B cell (primary cell): ENCODE measurements at regions of chr11 and their contacts with region 1.

Region 1: DNA sequence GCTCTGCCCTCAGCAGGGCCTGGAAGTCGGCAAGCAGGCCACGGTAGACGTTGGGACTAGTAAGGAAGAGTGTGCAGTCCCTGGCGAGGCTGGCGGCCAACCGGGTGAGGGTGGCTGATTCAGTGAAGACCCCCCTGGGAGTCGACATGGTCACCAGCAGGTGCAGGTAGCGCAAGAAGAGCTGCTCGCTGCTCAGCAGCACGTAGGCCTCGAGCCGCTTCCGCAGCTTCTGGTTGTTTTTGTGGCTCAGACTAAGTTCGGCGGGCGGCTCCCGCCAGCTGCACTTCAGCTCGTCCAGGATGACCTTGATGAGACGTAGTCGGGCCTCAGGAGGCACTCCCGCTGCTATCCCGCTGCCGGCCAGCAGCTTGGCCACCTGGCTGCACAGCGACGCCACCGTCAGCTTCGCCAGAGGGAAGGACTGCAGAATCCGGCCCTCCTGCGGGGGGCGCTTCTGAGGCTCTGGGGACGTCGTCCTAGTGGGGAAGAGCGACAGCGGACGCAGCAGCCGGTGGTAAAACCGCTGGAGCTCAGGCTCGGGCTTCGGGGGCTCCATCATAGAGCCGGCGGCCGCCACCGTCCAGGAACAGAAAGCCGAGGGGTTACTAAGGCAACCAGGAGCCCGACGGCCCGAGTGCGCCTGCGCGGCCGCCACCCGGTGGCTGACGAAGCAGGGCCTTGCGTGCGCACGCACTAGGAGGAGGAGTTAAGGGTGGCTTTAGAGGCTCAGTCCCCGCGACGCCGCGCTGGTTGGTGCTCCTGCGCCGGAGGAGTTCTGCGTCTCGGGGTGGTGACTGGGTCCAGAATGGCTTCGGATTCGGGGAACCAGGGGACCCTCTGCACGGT is at the starts of genes CCDC87 and CCS:
- DNase-seq: peak; percentile 96
- ATAC-seq: peak; percentile 95
- H3K4me3 ChIP-seq: peak within 1 kb of the TSS; percentile 63 to 84 (median 77)
- H3K4me3 Mint-ChIP-seq: peak within 1 kb of the TSS; percentile 100
- H3K27ac ChIP-seq: peak within 1 kb of the TSS; percentile 61 to 86
- H3K27ac Mint-ChIP-seq: peak within 1 kb of the TSS; percentile 99
- H3K4me1 ChIP-seq: peaks cover 28 to 29% of the 10 kb centered on the region in 2 donors
- H3K4me1 Mint-ChIP-seq: peaks cover 40% of the 10 kb centered on the region
- H3K27me3 ChIP-seq: no peaks in the 10 kb centered on the region
- H3K27me3 Mint-ChIP-seq: no peaks in the 10 kb centered on the region
- CTCF ChIP-seq: peak; percentile 77
- total RNA-seq, gene CCDC87: 0.17 and 0.39 TPM in 2 replicates
- total RNA-seq, gene CCS: 87.8 and 98.5 TPM in 2 replicates

Region 2: GRCh38 chr11:66045177-66045639 is 547.5 kb before region 1 on chr11:
- CTCF ChIA-PET with region 1: no interaction called
- POLR2A ChIA-PET with region 1: no interaction called
- intact Hi-C with region 1: no loop called
- DNase-seq: peak; percentile 88
- ATAC-seq: peak; percentile 96
- H3K4me3 ChIP-seq: no peak overlapping the region
- H3K4me3 Mint-ChIP-seq: no peak overlapping the region
- H3K27ac ChIP-seq: no peak overlapping the region
- H3K27ac Mint-ChIP-seq: peak overlapping the region; percentile 7
- H3K4me1 ChIP-seq: peaks cover 10 to 15% of the 10 kb centered on the region in 2 donors
- H3K4me1 Mint-ChIP-seq: peaks cover 16% of the 10 kb centered on the region
- H3K27me3 ChIP-seq: peaks cover 0 to 35% (median 5%) of the 10 kb centered on the region in 4 experiments
- H3K27me3 Mint-ChIP-seq: peaks cover 12% of the 10 kb centered on the region
- CTCF ChIP-seq: peak; percentile 94

Region 3: DNA sequence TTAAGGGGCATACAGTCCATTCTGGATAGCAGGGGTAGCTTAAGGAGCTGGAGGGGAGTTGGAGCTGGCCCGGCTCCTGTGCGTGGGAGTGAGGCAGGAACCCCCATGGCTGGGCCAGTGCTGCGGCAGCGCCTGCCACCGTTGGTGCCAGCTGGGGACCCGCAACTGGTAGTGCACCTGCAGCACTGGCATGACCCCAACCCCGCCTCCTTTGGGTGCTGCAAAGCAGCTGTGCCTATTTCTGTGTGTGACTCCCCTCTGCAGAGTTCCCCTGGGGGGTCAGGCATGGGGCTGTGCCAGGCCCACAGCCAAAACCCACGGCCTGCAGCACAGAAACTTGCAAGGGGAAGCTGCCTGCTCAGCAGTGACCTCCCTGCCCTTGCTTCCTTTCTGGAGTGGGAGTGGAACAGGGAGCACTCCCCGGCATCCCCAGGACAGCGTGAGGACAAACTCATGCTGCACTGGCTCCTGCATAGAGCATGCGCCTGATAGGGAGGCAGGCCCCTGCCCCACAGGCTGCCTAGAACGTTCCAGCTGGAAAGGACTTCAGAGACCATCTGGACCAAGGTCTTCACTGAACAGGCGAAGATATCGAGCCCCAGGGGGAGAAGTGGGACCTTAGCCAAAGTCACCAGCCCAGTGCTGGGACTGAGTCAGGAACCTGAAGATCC is 350.4 kb before region 1 on chr11:
- CTCF ChIA-PET with region 1: no interaction called
- POLR2A ChIA-PET with region 1: no interaction called
- intact Hi-C with region 1: no loop called
- DNase-seq: no peak
- ATAC-seq: peak; percentile 14
- H3K4me3 ChIP-seq: no peak overlapping the region
- H3K4me3 Mint-ChIP-seq: no peak overlapping the region
- H3K27ac ChIP-seq: no peak overlapping the region
- H3K27ac Mint-ChIP-seq: no peak overlapping the region
- H3K4me1 ChIP-seq: peaks cover 0 to 11% of the 10 kb centered on the region in 2 donors
- H3K4me1 Mint-ChIP-seq: peaks cover 8% of the 10 kb centered on the region
- H3K27me3 ChIP-seq: no peaks in the 10 kb centered on the region
- H3K27me3 Mint-ChIP-seq: no peaks in the 10 kb centered on the region
- CTCF ChIP-seq: no peak

Region 4: DNA sequence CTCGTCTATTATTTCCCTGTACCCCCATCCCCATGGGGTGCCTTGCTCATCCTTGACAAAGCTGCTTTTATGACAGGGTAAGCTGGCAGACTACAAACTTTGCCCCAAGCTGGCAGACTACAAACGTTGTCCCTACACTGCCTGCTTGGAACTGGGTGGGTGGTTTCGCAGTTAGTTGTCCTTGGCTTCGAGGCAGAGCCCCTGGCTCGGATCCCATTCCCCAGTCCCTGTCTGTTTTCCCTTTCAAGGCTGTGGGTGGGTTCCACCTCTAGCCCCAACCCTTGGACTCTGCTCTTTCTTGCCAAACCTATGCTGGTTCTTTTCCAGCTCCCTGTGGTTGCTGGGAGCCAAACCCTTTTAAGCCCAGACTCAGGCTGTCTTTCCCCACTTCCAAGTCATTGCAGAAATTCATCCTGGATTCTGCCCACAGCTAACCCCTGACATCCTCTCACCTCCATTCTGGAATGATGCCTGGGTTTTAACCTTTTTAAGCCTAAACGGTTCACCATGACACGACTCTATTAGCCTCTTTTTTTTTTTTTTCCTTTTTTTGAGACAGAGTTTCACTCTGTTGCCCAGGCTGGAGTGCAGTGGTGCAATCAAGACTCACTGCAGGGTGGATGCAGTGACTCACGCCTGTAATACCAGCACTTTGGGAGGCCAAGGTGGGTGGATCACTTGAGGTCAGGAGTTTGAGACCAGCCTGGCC is 14.6 kb after region 1 on chr11:
- CTCF ChIA-PET with region 1: interaction called, 6 read pairs
- POLR2A ChIA-PET with region 1: interaction called, 7 read pairs
- intact Hi-C with region 1: loop called (anchors 1 kb)
- DNase-seq: no peak
- ATAC-seq: no peak
- H3K4me3 ChIP-seq: no peak overlapping the region
- H3K4me3 Mint-ChIP-seq: no peak overlapping the region
- H3K27ac ChIP-seq: peak overlapping the region; percentile 9 to 56
- H3K27ac Mint-ChIP-seq: peak overlapping the region; percentile 76
- H3K4me1 ChIP-seq: peaks cover 41 to 56% of the 10 kb centered on the region in 2 donors
- H3K4me1 Mint-ChIP-seq: peaks cover 41% of the 10 kb centered on the region
- H3K27me3 ChIP-seq: no peaks in the 10 kb centered on the region
- H3K27me3 Mint-ChIP-seq: no peaks in the 10 kb centered on the region
- CTCF ChIP-seq: no peak

Region 5: DNA sequence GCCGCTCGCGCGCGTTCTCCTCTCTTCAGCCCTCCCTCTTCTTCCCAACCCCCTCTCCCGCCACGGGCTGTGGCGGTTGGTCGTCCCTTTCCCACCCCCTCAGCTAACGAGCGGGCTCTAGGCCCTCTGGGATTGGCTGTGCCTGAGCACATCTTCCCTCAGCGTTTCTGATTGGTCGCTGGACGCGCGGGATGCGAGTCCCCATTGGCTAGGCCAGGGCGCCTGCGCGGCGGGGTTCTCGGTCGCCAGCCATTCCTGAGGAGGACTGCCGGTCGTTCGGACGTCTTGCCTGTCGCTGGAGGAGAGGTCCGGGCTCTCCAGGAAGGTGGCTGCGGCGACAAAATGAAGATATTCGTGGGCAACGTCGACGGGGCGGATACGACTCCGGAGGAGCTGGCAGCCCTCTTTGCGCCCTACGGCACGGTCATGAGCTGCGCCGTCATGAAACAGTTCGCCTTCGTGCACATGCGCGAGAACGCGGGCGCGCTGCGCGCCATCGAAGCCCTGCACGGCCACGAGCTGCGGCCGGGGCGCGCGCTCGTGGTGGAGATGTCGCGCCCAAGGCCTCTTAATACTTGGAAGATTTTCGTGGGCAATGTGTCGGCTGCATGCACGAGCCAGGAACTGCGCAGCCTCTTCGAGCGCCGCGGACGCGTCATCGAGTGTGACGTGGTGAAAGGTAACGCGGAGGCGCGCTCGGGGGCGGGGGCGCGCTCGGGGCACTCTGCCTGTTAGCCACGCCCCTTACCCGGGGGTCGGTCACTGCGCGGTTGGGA is 23.9 kb after region 1 on chr11 and contains the start of gene RBM14:
- CTCF ChIA-PET with region 1: interaction called, 15 read pairs
- POLR2A ChIA-PET with region 1: interaction called, 14 read pairs
- intact Hi-C with region 1: loop called (anchors 1 kb)
- DNase-seq: peak; percentile 99
- ATAC-seq: peak; percentile 89
- H3K4me3 ChIP-seq: peak within 1 kb of the TSS; percentile 75 to 97 (median 94)
- H3K4me3 Mint-ChIP-seq: peak within 1 kb of the TSS; percentile 99
- H3K27ac ChIP-seq: peak within 1 kb of the TSS; percentile 85 to 90
- H3K27ac Mint-ChIP-seq: peak within 1 kb of the TSS; percentile 99
- H3K4me1 ChIP-seq: peaks cover 53 to 65% of the 10 kb centered on the region in 2 donors
- H3K4me1 Mint-ChIP-seq: peaks cover 59% of the 10 kb centered on the region
- H3K27me3 ChIP-seq: no peaks in the 10 kb centered on the region
- H3K27me3 Mint-ChIP-seq: no peaks in the 10 kb centered on the region
- CTCF ChIP-seq: no peak
- total RNA-seq, gene RBM14: 244 and 246 TPM in 2 replicates

Region 6: GRCh38 chr11:66659763-66660162 is 67.1 kb after region 1 on chr11:
- CTCF ChIA-PET with region 1: interaction called, 12 read pairs
- POLR2A ChIA-PET with region 1: no interaction called
- intact Hi-C with region 1: loop called (anchors 5 kb)
- DNase-seq: peak; percentile 62
- ATAC-seq: no peak
- H3K4me3 ChIP-seq: peak overlapping the region in 1 of 5 experiments; percentile 36
- H3K4me3 Mint-ChIP-seq: peak overlapping the region; percentile 78
- H3K27ac ChIP-seq: peak overlapping the region; percentile 65 to 69
- H3K27ac Mint-ChIP-seq: peak overlapping the region; percentile 87
- H3K4me1 ChIP-seq: peaks cover 30 to 34% of the 10 kb centered on the region in 2 donors
- H3K4me1 Mint-ChIP-seq: peaks cover 29% of the 10 kb centered on the region
- H3K27me3 ChIP-seq: no peaks in the 10 kb centered on the region
- H3K27me3 Mint-ChIP-seq: no peaks in the 10 kb centered on the region
- CTCF ChIP-seq: no peak